ENCODE measurements at regions of chr16 and their contacts with region 1.

Region 1: DNA sequence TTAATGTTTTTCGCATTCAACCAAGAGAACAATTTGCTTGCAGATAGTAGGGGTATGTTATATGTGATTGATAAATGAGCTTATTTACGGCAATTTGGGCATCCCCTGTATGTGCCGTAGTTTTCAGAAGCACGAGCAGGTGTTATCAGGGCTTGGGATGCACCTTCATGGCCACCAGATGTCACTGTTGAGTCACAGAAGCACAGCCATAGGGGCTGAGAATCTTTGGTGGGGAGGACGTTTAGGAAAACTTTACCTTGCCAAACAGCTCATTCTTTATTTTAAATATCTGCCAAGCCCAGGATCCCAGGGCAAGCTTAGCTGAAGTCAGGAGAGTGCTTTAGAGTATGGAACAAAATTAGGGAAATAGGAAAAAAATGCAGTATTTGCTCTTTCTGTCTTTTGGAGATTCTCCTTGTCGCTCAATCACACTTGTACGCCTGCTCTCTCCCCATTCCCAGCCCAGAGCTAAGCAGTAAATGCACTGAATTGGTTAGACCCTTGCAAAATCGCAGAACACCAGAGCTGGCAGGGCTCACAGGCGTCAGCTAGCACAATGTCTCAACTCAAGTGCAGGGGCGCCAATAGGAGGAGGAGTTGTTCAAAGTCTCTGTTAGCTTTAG is 93.6 kb upstream of the MPHOSPH6 start:
- DNase-seq: peak in 1 of 2 donors; percentile 20
- ATAC-seq: peak; percentile 82 to 97 (median 88)
- H3K4me3 ChIP-seq: no peak overlapping the region
- H3K27ac ChIP-seq: no peak overlapping the region
- H3K4me1 ChIP-seq: no peaks in the 10 kb centered on the region
- H3K27me3 ChIP-seq: no peaks in the 10 kb centered on the region
- CTCF ChIP-seq: peak; percentile 97

Region 2: DNA sequence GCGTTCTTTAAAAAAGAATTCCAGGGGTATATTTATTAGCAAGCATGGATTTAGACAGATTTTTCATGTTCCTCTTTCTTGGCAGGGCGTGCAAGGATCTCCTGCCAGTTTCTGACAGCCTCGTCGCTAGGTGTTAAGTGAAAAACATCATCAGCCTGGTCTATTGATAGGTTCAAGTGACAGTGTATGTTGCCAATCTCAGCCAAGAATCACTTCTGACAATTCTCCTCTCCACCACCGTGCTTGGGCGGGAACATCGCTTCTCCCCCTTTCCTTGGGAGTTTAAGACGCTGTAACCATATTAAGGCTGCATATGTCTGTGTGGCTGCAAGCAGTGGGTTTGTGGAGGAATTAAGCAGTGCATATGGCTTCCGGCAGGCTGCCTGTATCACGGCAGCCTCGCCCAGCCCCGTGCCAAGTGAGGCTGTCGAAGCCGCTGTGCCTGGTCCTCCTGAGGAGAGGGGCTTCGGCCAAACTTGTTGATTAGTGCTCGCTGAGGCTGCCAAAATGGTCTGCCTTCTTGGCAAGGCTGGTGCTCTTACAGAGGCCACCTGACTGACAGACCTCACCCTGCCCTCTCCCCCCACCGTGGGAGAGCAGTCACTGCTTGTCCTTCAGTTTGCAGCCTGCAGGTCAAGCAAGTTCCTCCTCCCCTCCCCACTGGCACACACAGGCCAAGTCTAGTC is 38.6 kb after region 1 on chr16:
- intact Hi-C with region 1: no loop called
- DNase-seq: no peak
- ATAC-seq: no peak
- H3K4me3 ChIP-seq: no peak overlapping the region
- H3K27ac ChIP-seq: no peak overlapping the region
- H3K4me1 ChIP-seq: no peaks in the 10 kb centered on the region
- H3K27me3 ChIP-seq: no peaks in the 10 kb centered on the region
- CTCF ChIP-seq: no peak

Region 3: DNA sequence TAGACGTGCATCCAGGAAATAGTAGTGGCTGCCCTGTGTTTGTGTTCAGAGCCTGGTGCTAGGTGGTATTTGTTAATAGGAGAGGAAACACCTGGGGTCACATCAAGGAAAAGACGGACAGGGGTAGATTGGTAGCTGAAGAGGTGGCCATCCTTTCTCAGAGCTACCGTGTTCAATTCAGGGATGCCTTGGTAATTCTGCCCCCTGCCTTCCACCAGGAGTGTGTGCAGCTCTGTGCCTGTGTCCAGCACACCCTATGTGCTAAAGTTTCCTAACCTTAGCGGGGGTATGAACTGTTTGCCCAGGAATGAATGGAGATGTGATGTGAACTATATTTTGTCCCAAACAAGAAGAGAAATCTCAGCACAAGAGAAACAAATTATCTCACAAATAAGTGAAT is 80.5 kb after region 1 on chr16:
- intact Hi-C with region 1: loop called in 1 of 2 experiments (anchors 2 kb)
- DNase-seq: no peak
- ATAC-seq: peak in 1 of 4 donors; percentile 61
- H3K4me3 ChIP-seq: no peak overlapping the region
- H3K27ac ChIP-seq: no peak overlapping the region
- H3K4me1 ChIP-seq: no peaks in the 10 kb centered on the region
- H3K27me3 ChIP-seq: no peaks in the 10 kb centered on the region
- CTCF ChIP-seq: peak; percentile 47

Region 4: GRCh38 chr16:82456683-82457082 is 193.1 kb after region 1 on chr16:
- intact Hi-C with region 1: loop called (anchors 2 to 5 kb)
- DNase-seq: peak; percentile 26 to 54
- ATAC-seq: peak; percentile 69 to 87 (median 76)
- H3K4me3 ChIP-seq: no peak overlapping the region
- H3K27ac ChIP-seq: no peak overlapping the region
- H3K4me1 ChIP-seq: no peaks in the 10 kb centered on the region
- H3K27me3 ChIP-seq: no peaks in the 10 kb centered on the region
- CTCF ChIP-seq: peak; percentile 71

Region 5: DNA sequence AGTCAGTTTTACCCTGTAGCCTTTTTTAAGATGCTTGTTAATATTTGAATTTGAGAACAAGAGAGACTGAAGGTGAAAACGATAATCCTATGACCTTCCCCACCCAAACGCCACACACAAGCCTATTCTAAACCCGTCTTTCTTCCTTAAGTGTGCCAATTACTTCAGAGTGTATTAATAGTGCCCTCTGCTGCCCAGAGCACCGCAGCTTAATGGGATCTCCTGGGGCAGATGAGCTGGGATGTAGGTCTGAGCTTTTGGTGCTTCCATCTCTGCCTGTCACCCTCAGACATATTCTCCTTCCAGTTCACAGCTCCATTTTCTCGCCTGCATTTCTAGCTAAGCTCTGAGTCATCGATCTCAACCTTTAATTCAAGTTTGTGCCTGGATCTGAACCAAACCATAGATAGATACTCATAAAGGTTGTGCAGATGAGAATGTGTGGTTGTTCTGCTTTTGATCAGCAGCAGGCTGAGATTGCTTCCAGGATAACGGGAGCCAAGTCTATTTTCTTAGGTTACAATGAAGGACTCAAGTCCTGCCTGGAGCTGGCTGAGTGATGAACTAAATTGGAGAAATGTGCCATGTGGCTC is 316.8 kb after region 1 on chr16:
- intact Hi-C with region 1: loop called (anchors 1 to 2 kb)
- DNase-seq: peak in 1 of 2 donors; percentile 56
- ATAC-seq: peak; percentile 71 to 74 (median 72)
- H3K4me3 ChIP-seq: no peak overlapping the region
- H3K27ac ChIP-seq: no peak overlapping the region
- H3K4me1 ChIP-seq: peaks cover 16% of the 10 kb centered on the region
- H3K27me3 ChIP-seq: no peaks in the 10 kb centered on the region
- CTCF ChIP-seq: peak; percentile 49

Region 6: GRCh38 chr16:83441517-83441916 is 1177.9 kb after region 1 on chr16:
- intact Hi-C with region 1: loop called (anchors 5 to 10 kb)
- DNase-seq: no peak
- ATAC-seq: peak in 1 of 4 donors; percentile 41
- H3K4me3 ChIP-seq: no peak overlapping the region
- H3K27ac ChIP-seq: no peak overlapping the region
- H3K4me1 ChIP-seq: peaks cover 4% of the 10 kb centered on the region
- H3K27me3 ChIP-seq: no peaks in the 10 kb centered on the region
- CTCF ChIP-seq: no peak

Region 7: GRCh38 chr16:83449861-83450260 is 1186.2 kb after region 1 on chr16:
- intact Hi-C with region 1: loop called (anchors 5 to 10 kb)
- DNase-seq: no peak
- ATAC-seq: no peak
- H3K4me3 ChIP-seq: no peak overlapping the region
- H3K27ac ChIP-seq: no peak overlapping the region
- H3K4me1 ChIP-seq: no peaks in the 10 kb centered on the region
- H3K27me3 ChIP-seq: no peaks in the 10 kb centered on the region
- CTCF ChIP-seq: no peak

Measured in psoas muscle (tissue), 8 donors.